Caco-2 (cell line): ENCODE measurements at regions of chr9 and their contacts with region 1.

Region 1: GRCh38 chr9:76615177-76615603 is 149.0 kb upstream of the PCA3 start:
- DNase-seq: peak; percentile 58 to 80
- H3K4me3 ChIP-seq: peak overlapping the region; percentile 28
- H3K4me3 Mint-ChIP-seq: peak overlapping the region; percentile 65
- H3K27ac Mint-ChIP-seq: peak overlapping the region; percentile 69
- H3K4me1 ChIP-seq: peaks cover 4% of the 10 kb centered on the region; the same call in 1 of the 2 replicates
- H3K4me1 Mint-ChIP-seq: no peaks in the 10 kb centered on the region
- H3K27me3 ChIP-seq: no peaks in the 10 kb centered on the region
- H3K27me3 Mint-ChIP-seq: no peaks in the 10 kb centered on the region
- CTCF ChIP-seq: no peak

Region 2: DNA sequence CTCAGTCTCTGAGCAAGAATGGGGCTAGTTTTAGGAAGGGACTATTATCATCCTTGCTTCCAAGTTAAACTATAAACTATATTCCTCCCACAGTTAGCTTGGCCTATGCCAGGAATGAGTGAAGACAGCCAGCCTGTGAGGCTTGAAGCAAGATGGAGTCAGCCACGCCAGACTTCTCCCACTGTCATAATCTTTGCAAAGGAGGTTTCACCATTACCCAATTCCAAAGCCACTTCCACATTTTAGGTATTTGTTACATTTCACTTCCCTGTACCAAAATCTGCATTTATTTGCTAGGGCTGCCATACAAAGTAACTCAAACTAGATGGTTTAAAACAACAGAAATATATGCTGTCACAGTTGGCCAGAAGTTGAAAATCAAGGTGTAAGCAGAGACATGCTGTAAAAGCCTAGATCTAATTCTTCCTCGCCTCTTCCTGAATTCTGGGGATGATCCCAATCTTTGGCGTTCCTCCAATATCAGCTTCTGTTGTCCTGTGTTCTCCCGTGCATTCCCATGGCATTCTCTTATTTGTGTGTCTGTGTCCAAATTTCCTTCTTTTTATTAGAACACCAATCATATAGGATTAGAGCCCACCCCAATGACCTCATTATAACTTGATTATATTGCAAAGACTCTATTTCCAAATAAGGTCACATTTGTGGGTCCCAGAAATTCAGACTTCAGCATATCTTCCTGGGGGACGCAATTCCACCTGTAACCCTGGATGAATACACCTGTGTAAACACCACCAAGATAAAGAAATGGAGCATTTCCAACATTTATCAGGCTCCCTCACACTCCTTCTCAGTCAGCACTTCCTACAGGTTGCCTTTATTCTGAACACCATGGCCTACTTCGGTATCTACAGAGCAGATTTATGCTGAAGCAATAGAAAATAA is 29.5 kb before region 1 on chr9:
- CTCF ChIA-PET with region 1: no interaction called
- POLR2A ChIA-PET with region 1: no interaction called
- intact Hi-C with region 1: loop called (anchors 1 kb)
- DNase-seq: peak; percentile 36 to 55
- H3K4me3 ChIP-seq: no peak overlapping the region
- H3K4me3 Mint-ChIP-seq: no peak overlapping the region
- H3K27ac Mint-ChIP-seq: no peak overlapping the region
- H3K4me1 ChIP-seq: peaks cover 20% of the 10 kb centered on the region
- H3K4me1 Mint-ChIP-seq: peaks cover 12% of the 10 kb centered on the region
- H3K27me3 ChIP-seq: no peaks in the 10 kb centered on the region
- H3K27me3 Mint-ChIP-seq: no peaks in the 10 kb centered on the region
- CTCF ChIP-seq: no peak

Region 3: GRCh38 chr9:76716085-76716672 is 101.0 kb after region 1 on chr9:
- CTCF ChIA-PET with region 1: no interaction called
- POLR2A ChIA-PET with region 1: no interaction called
- intact Hi-C with region 1: no loop called
- DNase-seq: no peak
- H3K4me3 ChIP-seq: no peak overlapping the region
- H3K4me3 Mint-ChIP-seq: no peak overlapping the region
- H3K27ac Mint-ChIP-seq: no peak overlapping the region
- H3K4me1 ChIP-seq: no peaks in the 10 kb centered on the region
- H3K4me1 Mint-ChIP-seq: peaks cover 5% of the 10 kb centered on the region
- H3K27me3 ChIP-seq: no peaks in the 10 kb centered on the region
- H3K27me3 Mint-ChIP-seq: no peaks in the 10 kb centered on the region
- CTCF ChIP-seq: no peak